Endothelial cell of umbilical vein (primary cell): ENCODE measurements at regions of chr12 and their contacts with region 1.

Region 1: DNA sequence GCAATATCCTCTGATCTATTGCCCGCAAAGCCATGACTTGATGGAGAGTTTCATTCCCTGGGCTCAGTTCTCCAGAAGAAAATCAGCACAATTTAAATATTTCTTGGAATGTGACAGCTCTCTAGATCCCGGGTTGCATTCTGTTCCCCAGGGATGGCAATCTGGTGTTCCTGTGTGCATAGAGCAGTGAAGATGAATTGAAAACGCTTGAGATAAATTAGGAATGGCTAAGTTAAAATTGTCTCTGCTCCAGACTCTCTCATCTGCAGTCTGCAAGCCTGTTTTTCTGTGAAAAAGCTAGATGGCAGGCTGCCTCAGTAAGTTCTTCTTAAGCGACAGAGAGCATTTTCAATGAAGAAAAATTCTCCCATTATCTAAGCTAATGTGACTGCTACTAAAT is 582.5 kb upstream of the MGAT4C start:
- DNase-seq: no peak
- H3K4me3 ChIP-seq: no peak overlapping the region
- H3K27ac ChIP-seq: no peak overlapping the region
- H3K4me1 ChIP-seq: no peaks in the 10 kb centered on the region
- H3K27me3 ChIP-seq: no peaks in the 10 kb centered on the region
- CTCF ChIP-seq: no peak
- POLR2A ChIP-seq: no peak

Region 2: DNA sequence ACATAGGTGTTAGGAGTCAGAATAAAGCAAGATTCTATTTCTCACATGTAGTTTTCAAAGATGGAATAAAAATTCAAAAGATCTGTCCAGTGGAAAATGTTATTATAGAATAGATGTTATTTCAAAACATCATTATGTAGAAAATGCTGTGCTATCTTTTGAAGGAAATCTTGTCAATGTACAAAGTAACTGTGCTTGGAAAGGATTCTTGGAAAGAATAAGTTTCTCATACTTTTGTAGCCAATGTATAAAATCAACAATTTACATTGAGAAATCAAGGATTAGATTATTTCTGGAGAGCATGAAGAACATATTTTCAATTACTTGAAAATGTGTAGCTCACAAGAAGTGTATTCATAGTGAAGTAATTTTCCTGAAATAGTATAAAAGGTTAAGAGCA is 50.0 kb before region 1 on chr12:
- CTCF ChIA-PET with region 1: no interaction called
- POLR2A ChIA-PET with region 1: no interaction called
- dilution Hi-C with region 1: no loop called
- intact Hi-C with region 1: loop called (anchors 10 kb)
- DNase-seq: no peak
- H3K4me3 ChIP-seq: no peak overlapping the region
- H3K27ac ChIP-seq: no peak overlapping the region
- H3K4me1 ChIP-seq: no peaks in the 10 kb centered on the region
- H3K27me3 ChIP-seq: no peaks in the 10 kb centered on the region
- CTCF ChIP-seq: no peak
- POLR2A ChIP-seq: no peak